CD8-positive, alpha-beta T cell (primary cell): ENCODE measurements at regions of chr10 and their contacts with region 1.

Region 1: DNA sequence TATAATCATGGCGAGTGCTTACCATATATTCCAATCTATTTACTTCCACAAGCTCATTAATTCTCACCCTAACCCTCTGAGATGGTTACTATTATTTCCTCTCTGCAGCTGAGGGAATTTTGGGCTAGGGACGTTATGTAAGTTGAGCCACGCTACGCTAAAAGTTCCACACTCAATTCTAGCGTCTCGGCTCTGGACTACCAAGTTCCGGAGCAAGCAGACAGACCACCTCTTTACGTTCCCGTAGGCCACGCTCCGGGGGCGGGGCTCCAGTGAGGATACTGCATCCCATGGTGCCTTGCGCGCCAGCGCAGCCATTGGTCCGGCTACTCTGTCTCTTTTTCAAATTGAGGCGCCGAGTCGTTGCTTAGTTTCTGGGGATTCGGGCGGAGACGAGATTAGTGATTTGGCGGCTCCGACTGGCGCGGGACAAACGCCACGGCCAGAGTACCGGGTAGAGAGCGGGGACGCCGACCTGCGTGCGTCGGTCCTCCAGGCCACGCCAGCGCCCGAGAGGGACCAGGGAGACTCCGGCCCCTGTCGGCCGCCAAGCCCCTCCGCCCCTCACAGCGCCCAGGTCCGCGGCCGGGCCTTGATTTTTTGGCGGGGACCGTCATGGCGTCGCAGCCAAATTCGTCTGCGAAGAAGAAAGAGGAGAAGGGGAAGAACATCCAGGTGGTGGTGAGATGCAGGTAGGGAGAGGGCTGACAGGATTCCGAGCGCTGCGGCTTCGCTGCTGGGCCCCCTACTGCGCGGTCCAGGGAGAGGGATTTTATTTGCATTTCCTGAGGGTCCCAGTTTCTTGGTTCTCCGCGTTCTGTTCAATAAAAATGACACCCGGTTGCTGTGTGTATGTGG is at the start of gene KIF11:
- DNase-seq: peak; percentile 94 to 99 (median 96)
- ATAC-seq: peak; percentile 87
- H3K4me3 ChIP-seq: peak within 1 kb of the TSS; percentile 62 to 82
- H3K4me3 Mint-ChIP-seq: peak within 1 kb of the TSS; percentile 97
- H3K27ac ChIP-seq: peak within 1 kb of the TSS; percentile 72 to 90
- H3K27ac Mint-ChIP-seq: peak within 1 kb of the TSS; percentile 99
- H3K4me1 ChIP-seq: peaks cover 20% of the 10 kb centered on the region
- H3K4me1 Mint-ChIP-seq: peaks cover 28% of the 10 kb centered on the region
- H3K27me3 ChIP-seq: no peaks in the 10 kb centered on the region
- H3K27me3 Mint-ChIP-seq: peaks cover 5% of the 10 kb centered on the region
- CTCF ChIP-seq: no peak
- total RNA-seq, gene KIF11: 0.36 to 0.38 TPM

Region 2: DNA sequence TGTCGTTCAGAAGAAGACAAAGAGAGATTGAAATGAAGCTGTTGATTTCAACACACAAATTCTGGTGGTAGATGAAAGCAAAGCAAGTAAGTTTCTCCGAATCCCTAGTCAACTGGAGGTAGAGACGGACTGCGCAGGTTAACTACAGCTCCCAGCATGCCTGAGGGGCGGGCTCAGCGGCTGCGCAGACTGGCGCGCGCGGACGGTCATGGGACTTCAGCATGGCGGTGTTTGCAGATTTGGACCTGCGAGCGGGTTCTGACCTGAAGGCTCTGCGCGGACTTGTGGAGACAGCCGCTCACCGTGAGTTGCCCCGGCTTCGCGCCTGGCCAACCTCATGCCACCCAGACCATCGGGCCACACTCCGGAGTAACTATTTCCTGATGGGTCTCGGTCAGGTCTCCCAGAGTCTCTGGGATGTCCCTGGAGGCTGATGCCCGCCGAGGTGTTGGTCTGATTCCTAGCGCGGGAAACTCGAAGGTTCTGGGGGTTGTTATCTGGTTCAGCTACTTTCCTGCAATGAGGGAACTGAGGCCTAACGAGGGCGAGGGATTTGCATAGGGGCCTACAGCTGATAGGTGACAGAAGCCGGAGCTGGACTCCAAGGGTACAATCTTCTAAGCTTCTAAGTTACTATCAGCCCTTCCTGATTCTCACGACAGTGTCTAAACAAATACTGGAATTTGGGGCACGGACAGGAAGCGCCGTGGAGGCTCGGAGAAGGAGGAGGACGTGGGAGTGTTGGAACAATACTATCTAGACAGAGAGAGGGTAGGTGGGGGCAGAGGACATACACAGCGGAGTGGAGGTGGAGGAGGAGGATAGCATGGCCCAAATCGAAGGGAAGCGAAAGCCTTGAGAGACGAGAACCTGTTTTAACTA is 1721.0 kb before region 1 on chr10 and contains the start of gene RPP30:
- CTCF ChIA-PET with region 1: no interaction called
- POLR2A ChIA-PET with region 1: no interaction called
- intact Hi-C with region 1: loop called in 1 of 2 experiments (anchors 10 kb)
- DNase-seq: peak; percentile 65 to 84 (median 79)
- ATAC-seq: peak; percentile 99
- H3K4me3 ChIP-seq: peak within 1 kb of the TSS; percentile 73 to 95
- H3K4me3 Mint-ChIP-seq: peak within 1 kb of the TSS; percentile 97
- H3K27ac ChIP-seq: peak within 1 kb of the TSS; percentile 34 to 58
- H3K27ac Mint-ChIP-seq: peak within 1 kb of the TSS; percentile 88
- H3K4me1 ChIP-seq: peaks cover 18% of the 10 kb centered on the region
- H3K4me1 Mint-ChIP-seq: peaks cover 40% of the 10 kb centered on the region
- H3K27me3 ChIP-seq: no peaks in the 10 kb centered on the region
- H3K27me3 Mint-ChIP-seq: peaks cover 20% of the 10 kb centered on the region
- CTCF ChIP-seq: no peak
- total RNA-seq, gene RPP30: 29.7 TPM

Region 3: DNA sequence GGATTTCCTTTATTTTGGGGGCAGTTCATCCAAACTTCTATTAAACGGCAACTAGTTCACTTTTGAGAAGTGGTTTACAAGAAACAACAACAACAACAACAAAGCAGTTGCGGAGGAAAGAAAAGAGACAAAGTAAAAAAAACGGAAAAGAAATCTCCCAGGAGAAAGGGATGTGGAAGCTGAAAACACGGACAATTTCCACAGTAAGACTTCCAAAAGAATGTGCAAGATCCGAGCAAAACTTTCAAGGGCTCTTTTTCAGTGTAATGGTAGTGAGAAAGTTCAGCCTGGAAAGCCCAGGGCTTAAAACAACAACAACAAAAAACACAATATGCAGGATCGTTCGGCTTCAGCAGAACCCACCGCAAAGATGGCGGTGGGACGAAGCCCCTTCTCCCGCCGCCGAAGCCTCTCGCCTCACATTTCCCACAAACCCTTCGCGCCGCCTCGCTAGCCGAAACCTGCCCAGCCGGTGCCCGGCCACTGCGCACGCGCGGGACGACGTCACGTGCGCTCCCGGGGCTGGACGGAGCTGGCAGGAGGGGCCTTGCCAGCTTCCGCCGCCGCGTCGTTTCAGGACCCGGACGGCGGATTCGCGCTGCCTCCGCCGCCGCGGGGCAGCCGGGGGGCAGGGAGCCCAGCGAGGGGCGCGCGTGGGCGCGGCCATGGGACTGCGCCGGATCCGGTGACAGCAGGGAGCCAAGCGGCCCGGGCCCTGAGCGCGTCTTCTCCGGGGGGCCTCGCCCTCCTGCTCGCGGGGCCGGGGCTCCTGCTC is 794.9 kb before region 1 on chr10 and contains the start of gene TNKS2:
- CTCF ChIA-PET with region 1: no interaction called
- POLR2A ChIA-PET with region 1: no interaction called
- intact Hi-C with region 1: loop called (anchors 5 kb)
- DNase-seq: peak; percentile 83 to 96 (median 92)
- ATAC-seq: peak; percentile 69
- H3K4me3 ChIP-seq: peak within 1 kb of the TSS; percentile 81 to 85
- H3K4me3 Mint-ChIP-seq: peak within 1 kb of the TSS; percentile 99
- H3K27ac ChIP-seq: peak within 1 kb of the TSS; percentile 88 to 91
- H3K27ac Mint-ChIP-seq: peak within 1 kb of the TSS; percentile 99
- H3K4me1 ChIP-seq: peaks cover 35% of the 10 kb centered on the region
- H3K4me1 Mint-ChIP-seq: peaks cover 64% of the 10 kb centered on the region
- H3K27me3 ChIP-seq: no peaks in the 10 kb centered on the region
- H3K27me3 Mint-ChIP-seq: no peaks in the 10 kb centered on the region
- CTCF ChIP-seq: no peak
- total RNA-seq, gene TNKS2: 46.4 to 49.4 TPM

Region 4: GRCh38 chr10:91923371-91924211 is 669.4 kb before region 1 on chr10 and contains the start of gene BTAF1:
- CTCF ChIA-PET with region 1: no interaction called
- POLR2A ChIA-PET with region 1: interaction called, 4 read pairs
- intact Hi-C with region 1: loop called in 1 of 2 experiments (anchors 1 kb)
- DNase-seq: peak; percentile 82 to 97 (median 93)
- ATAC-seq: peak; percentile 94
- H3K4me3 ChIP-seq: peak within 1 kb of the TSS; percentile 87 to 97
- H3K4me3 Mint-ChIP-seq: peak within 1 kb of the TSS; percentile 99
- H3K27ac ChIP-seq: peak within 1 kb of the TSS; percentile 92 to 97
- H3K27ac Mint-ChIP-seq: peak within 1 kb of the TSS; percentile 98
- H3K4me1 ChIP-seq: peaks cover 36% of the 10 kb centered on the region
- H3K4me1 Mint-ChIP-seq: peaks cover 50% of the 10 kb centered on the region
- H3K27me3 ChIP-seq: peaks cover 0 to 2% of the 10 kb centered on the region in 2 experiments
- H3K27me3 Mint-ChIP-seq: peaks cover 2% of the 10 kb centered on the region
- CTCF ChIP-seq: no peak
- total RNA-seq, gene BTAF1: 88.6 to 90.7 TPM

Region 5: GRCh38 chr10:91983416-91983815 is 609.6 kb before region 1 on chr10:
- CTCF ChIA-PET with region 1: no interaction called
- POLR2A ChIA-PET with region 1: no interaction called
- intact Hi-C with region 1: no loop called
- DNase-seq: no peak
- ATAC-seq: no peak
- H3K4me3 ChIP-seq: no peak overlapping the region
- H3K4me3 Mint-ChIP-seq: no peak overlapping the region
- H3K27ac ChIP-seq: no peak overlapping the region
- H3K27ac Mint-ChIP-seq: no peak overlapping the region
- H3K4me1 ChIP-seq: no peaks in the 10 kb centered on the region
- H3K4me1 Mint-ChIP-seq: peaks cover 5% of the 10 kb centered on the region
- H3K27me3 ChIP-seq: no peaks in the 10 kb centered on the region
- H3K27me3 Mint-ChIP-seq: no peaks in the 10 kb centered on the region
- CTCF ChIP-seq: no peak

Region 6: DNA sequence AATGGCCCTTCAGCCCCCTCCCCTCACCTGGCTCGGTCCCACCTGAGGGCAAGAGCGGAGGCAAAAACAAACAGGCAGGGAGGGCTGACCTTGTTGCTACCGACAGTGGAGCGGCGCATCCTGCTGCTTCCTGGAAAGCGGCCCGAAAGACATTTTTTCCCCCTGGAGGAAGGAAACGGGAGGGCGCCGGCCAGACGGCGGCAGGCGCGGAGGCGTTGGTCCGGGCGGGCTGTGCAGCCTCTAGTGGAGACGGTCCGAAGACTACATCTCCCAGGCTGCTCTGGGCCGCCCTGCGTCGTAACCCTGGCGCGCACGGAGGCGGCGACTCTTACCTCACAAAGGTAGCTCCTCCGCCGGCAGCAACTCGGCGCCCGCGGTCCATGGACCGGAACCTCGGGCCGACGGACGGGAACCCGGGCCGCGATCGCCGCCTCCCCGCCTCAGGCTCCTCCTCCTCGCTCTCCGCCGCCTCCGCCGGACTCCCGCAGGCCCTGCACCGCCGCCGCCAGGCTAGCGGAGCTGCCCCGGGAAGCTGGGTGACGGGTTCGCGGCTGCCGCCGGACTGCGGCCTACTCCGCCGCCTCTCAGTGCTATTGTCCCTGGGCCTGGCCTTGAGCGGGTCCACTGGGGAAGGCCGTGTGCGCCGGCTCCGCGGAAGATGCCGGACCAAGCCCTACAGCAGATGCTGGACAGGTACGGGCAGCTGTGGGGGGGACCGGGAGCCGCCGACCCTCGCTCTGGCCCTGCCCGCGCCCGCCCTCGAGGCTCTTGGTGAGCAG is 302.0 kb before region 1 on chr10 and contains the starts of genes CPEB3 and MARCHF5:
- CTCF ChIA-PET with region 1: no interaction called
- POLR2A ChIA-PET with region 1: interaction called, 3 read pairs
- intact Hi-C with region 1: loop called (anchors 1 to 5 kb)
- DNase-seq: peak; percentile 78 to 96 (median 90)
- ATAC-seq: peak; percentile 97
- H3K4me3 ChIP-seq: peak within 1 kb of the TSS; percentile 91 to 98
- H3K4me3 Mint-ChIP-seq: peak within 1 kb of the TSS; percentile 97
- H3K27ac ChIP-seq: peak within 1 kb of the TSS; percentile 70 to 83
- H3K27ac Mint-ChIP-seq: peak within 1 kb of the TSS; percentile 88
- H3K4me1 ChIP-seq: peaks cover 20% of the 10 kb centered on the region
- H3K4me1 Mint-ChIP-seq: peaks cover 36% of the 10 kb centered on the region
- H3K27me3 ChIP-seq: no peaks in the 10 kb centered on the region
- H3K27me3 Mint-ChIP-seq: no peaks in the 10 kb centered on the region
- CTCF ChIP-seq: peak; percentile 50
- total RNA-seq, gene CPEB3: 0.71 to 1.1 TPM
- total RNA-seq, gene MARCHF5: 48.3 to 48.9 TPM

Region 7: GRCh38 chr10:92573798-92574547 is 19.0 kb before region 1 on chr10 and contains the start of gene IDE:
- CTCF ChIA-PET with region 1: interaction called, 38 read pairs
- POLR2A ChIA-PET with region 1: interaction called, 55 read pairs
- intact Hi-C with region 1: loop called (anchors 1 kb)
- DNase-seq: peak; percentile 43 to 89 (median 76)
- ATAC-seq: peak; percentile 70
- H3K4me3 ChIP-seq: peak within 1 kb of the TSS; percentile 85 to 100
- H3K4me3 Mint-ChIP-seq: peak within 1 kb of the TSS; percentile 93
- H3K27ac ChIP-seq: peak within 1 kb of the TSS; percentile 74 to 92
- H3K27ac Mint-ChIP-seq: peak within 1 kb of the TSS; percentile 93
- H3K4me1 ChIP-seq: peaks cover 18% of the 10 kb centered on the region
- H3K4me1 Mint-ChIP-seq: peaks cover 42% of the 10 kb centered on the region
- H3K27me3 ChIP-seq: no peaks in the 10 kb centered on the region
- H3K27me3 Mint-ChIP-seq: no peaks in the 10 kb centered on the region
- CTCF ChIP-seq: no peak
- total RNA-seq, gene IDE: 12.1 to 13.2 TPM

Region 8: GRCh38 chr10:92901819-92902251 is 308.8 kb after region 1 on chr10:
- CTCF ChIA-PET with region 1: no interaction called
- POLR2A ChIA-PET with region 1: no interaction called
- intact Hi-C with region 1: no loop called
- DNase-seq: peak in 7 of 9 experiments; percentile 4 to 86 (median 33)
- ATAC-seq: peak; percentile 84
- H3K4me3 ChIP-seq: peak overlapping the region in 1 of 2 experiments; percentile 41
- H3K4me3 Mint-ChIP-seq: peak overlapping the region; percentile 76
- H3K27ac ChIP-seq: no peak overlapping the region
- H3K27ac Mint-ChIP-seq: peak overlapping the region; percentile 25
- H3K4me1 ChIP-seq: peaks cover 15% of the 10 kb centered on the region
- H3K4me1 Mint-ChIP-seq: peaks cover 21% of the 10 kb centered on the region
- H3K27me3 ChIP-seq: no peaks in the 10 kb centered on the region
- H3K27me3 Mint-ChIP-seq: no peaks in the 10 kb centered on the region
- CTCF ChIP-seq: no peak

Region 9: GRCh38 chr10:93702211-93703001 is 1109.4 kb after region 1 on chr10 and contains the start of gene FRA10AC1:
- CTCF ChIA-PET with region 1: no interaction called
- POLR2A ChIA-PET with region 1: no interaction called
- intact Hi-C with region 1: loop called in 1 of 2 experiments (anchors 5 kb)
- DNase-seq: peak; percentile 73 to 94 (median 89)
- ATAC-seq: peak; percentile 83
- H3K4me3 ChIP-seq: peak within 1 kb of the TSS; percentile 90 to 96
- H3K4me3 Mint-ChIP-seq: no peak within 1 kb of the TSS
- H3K27ac ChIP-seq: peak within 1 kb of the TSS; percentile 82 to 86
- H3K27ac Mint-ChIP-seq: no peak within 1 kb of the TSS
- H3K4me1 ChIP-seq: peaks cover 14% of the 10 kb centered on the region
- H3K4me1 Mint-ChIP-seq: peaks cover 15% of the 10 kb centered on the region
- H3K27me3 ChIP-seq: no peaks in the 10 kb centered on the region
- H3K27me3 Mint-ChIP-seq: no peaks in the 10 kb centered on the region
- CTCF ChIP-seq: no peak
- total RNA-seq, gene FRA10AC1: 6.2 to 7.0 TPM